Activated B cell treated with CpG ODN at 0.5 μM for 24 hours (primary cell): ENCODE measurements at regions of chr19 and their contacts with region 1.

Region 1: DNA sequence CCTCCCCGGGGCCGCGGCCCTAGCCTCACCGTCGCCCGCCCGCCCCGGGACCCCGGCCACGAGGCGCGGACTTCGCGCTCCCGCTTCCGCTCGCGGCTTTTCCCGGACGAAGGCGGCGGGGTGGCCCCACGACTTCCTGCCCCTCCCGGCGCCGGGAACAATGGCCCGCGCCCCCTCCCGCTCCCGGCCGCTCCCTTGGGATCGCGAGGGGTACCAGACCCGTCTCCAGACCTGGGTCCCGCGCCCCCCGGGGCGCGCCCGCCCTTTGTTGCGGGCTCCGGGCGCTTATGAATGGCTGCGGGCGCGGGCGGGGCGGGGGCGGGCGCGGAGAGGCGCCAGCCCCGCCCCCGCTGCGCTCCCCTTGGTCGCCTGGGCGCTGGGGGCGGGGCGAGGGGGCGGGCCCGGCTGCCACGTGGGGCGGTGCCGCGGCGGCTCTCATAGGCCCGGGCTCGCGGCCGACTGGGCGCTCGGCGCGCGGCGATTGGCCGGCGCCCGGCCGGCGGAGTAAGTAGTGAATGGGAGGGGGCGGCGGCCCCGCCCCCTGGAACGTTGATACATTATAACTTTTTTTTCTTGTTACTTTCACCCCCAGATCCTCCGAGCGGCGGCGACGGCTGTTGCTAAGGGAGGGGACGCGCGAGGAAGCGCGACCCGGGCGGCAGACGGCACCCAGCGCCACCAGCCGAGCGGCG is 1.1 kb downstream of the MIDN start:
- DNase-seq: peak; percentile 84
- ATAC-seq: peak; percentile 49
- H3K4me3 Mint-ChIP-seq: peak overlapping the region; percentile 80
- H3K27ac Mint-ChIP-seq: peak overlapping the region; percentile 81
- H3K4me1 Mint-ChIP-seq: peaks cover 31% of the 10 kb centered on the region
- H3K27me3 Mint-ChIP-seq: no peaks in the 10 kb centered on the region
- CTCF ChIP-seq: no peak

Region 2: DNA sequence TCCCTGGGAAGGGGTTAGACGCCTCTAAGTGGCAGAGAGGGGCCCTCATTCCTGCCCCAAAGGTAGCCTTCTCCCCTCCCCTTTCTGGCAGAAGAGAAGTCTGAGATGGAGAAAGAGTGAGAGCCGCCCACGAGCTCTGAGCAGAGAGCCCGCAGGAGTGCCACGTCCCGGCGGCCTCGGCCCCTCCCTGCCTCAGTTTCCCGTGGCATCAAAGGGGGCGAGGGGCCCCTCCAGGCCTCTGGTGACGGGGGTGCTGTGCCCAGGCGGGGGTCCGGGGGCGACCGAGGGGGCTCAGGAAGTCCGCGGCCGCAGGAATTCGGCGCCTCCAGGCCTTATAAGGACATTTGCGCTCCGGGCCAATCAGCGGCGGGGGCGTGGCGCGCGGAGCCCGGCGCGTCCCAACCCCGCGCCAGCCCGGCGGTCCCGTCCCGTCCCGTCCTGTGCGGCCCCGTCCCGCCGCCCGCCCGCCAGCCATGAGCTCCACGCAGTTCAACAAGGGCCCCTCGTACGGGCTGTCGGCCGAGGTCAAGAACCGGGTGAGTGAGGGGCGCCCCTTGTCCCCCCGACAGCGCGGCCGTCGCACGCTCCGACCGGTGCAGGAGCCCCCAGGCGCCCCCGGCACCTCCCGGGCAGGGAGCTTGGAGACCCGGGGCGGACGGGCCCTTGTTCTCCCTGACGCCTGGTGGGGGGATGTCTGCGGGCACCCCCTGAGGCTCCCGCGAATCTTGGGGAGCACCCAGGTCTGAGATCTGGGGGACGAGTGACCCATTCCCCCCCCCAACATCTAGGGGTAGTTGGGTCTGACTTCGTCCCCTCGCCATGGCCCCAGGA is 223.0 kb before region 1 on chr19 and contains the start of gene CNN2:
- CTCF ChIA-PET with region 1: interaction called, 4 read pairs
- POLR2A ChIA-PET with region 1: interaction called, 10 read pairs
- intact Hi-C with region 1: no loop called
- DNase-seq: peak; percentile 76
- ATAC-seq: peak; percentile 61
- H3K4me3 Mint-ChIP-seq: peak within 1 kb of the TSS; percentile 95
- H3K27ac Mint-ChIP-seq: peak within 1 kb of the TSS; percentile 91
- H3K4me1 Mint-ChIP-seq: peaks cover 29% of the 10 kb centered on the region
- H3K27me3 Mint-ChIP-seq: no peaks in the 10 kb centered on the region
- CTCF ChIP-seq: no peak
- total RNA-seq, gene CNN2: 352 and 371 TPM in 2 replicates

Region 3: DNA sequence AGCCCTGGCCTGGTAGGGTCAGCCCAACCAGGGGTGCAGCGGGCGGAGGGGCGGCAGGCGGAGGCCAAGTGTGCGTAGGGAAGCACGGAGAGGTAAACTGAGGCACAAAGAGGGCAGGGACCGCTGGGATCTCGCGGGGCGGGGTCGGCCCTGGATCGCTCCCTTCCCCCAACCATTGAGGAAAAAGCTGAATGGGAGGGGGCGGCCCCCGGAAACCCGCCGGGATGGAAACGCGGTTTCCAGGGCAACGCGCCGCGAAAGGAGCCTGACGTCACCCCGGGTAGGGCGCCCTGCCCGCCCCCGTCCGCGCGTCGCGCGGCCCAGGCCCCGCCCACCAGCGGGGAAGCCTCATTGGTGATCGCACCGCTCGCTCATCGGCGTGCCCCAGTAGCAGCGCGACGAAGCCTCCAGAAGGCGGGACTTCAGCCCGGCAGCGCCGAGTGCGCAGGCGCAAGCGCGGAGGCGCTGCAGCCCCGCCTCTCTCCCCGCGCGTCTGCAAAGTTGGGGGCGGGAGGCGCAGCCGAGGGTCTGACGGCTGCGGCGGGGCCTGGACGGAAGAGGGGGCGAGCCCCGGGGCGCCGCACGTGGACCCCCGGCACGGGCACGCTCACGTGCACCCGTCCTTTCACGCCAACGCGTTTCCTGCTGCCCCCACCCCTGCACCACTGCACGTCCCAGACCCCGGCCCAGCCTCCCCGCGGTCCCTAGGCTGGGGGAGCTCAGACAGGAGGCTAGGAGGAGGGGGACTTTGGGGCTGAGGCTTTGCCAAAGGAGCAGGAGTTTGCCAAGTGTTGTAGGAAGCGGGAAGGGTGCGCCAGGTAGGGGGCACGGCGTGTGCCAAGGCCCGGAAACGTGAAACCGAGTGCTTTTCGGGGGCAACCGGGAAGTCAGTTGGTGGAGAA is 11.4 kb after region 1 on chr19:
- CTCF ChIA-PET with region 1: interaction called, 540 read pairs
- POLR2A ChIA-PET with region 1: interaction called, 824 read pairs
- intact Hi-C with region 1: loop called (anchors 1 kb)
- DNase-seq: peak; percentile 95
- ATAC-seq: peak; percentile 63
- H3K4me3 Mint-ChIP-seq: peak overlapping the region; percentile 91
- H3K27ac Mint-ChIP-seq: peak overlapping the region; percentile 98
- H3K4me1 Mint-ChIP-seq: peaks cover 82% of the 10 kb centered on the region
- H3K27me3 Mint-ChIP-seq: no peaks in the 10 kb centered on the region
- CTCF ChIP-seq: no peak

Region 4: DNA sequence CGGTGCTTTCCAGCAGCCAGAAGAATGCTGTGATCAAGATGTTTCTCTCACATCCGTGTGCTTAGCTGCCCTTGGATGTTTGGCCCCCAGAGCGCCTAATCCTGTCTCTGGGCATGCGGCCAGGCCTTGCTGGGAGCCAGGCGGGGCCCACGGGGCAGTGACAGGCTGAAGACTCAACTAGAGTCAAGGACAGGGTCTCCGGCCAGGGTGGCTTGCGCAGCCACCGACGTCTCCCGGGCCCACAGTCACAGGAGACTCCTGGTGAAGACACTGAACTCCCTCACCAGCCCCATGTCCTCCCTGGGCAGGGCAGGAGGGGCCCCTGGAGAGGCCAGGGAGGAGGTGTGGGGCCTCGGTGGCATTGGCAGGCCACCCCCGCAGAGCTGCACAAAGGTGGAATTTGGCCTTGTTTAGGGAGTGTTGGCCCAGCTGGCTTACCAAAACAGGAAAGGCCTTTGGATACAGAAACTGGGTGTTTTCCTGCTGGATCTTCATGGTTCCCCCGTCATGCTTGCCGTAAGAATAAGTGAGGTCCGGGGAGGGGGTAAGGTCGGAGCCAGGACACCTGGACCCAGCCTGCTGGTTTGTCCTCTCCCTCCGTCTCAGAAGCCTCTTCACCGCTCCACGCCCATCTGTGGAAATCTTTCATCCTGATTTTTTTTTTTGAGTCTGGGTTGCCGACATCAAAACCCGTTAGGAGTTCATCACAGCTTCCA is 124.2 kb after region 1 on chr19:
- CTCF ChIA-PET with region 1: interaction called, 8 read pairs
- POLR2A ChIA-PET with region 1: interaction called, 6 read pairs
- intact Hi-C with region 1: loop called (anchors 1 kb)
- DNase-seq: no peak
- ATAC-seq: no peak
- H3K4me3 Mint-ChIP-seq: no peak overlapping the region
- H3K27ac Mint-ChIP-seq: no peak overlapping the region
- H3K4me1 Mint-ChIP-seq: no peaks in the 10 kb centered on the region
- H3K27me3 Mint-ChIP-seq: no peaks in the 10 kb centered on the region
- CTCF ChIP-seq: no peak